Naive thymus-derived CD4-positive, alpha-beta T cell (primary cell): ENCODE measurements at regions of chr4 and their contacts with region 1.

Region 1: GRCh38 chr4:77742054-77742453 is 77.1 kb downstream of the CNOT6L start:
- DNase-seq: no peak
- ATAC-seq: no peak
- H3K4me3 ChIP-seq: no peak overlapping the region
- H3K4me3 Mint-ChIP-seq: no peak overlapping the region
- H3K27ac ChIP-seq: no peak overlapping the region
- H3K27ac Mint-ChIP-seq: peak overlapping the region in 1 of 9 donors; percentile 59
- H3K4me1 ChIP-seq: peaks cover 0 to 1% of the 10 kb centered on the region in 2 donors
- H3K4me1 Mint-ChIP-seq: peaks cover 22 to 67% (median 52%) of the 10 kb centered on the region in 7 donors
- H3K27me3 ChIP-seq: no peaks in the 10 kb centered on the region
- H3K27me3 Mint-ChIP-seq: no peaks in the 10 kb centered on the region

Region 2: DNA sequence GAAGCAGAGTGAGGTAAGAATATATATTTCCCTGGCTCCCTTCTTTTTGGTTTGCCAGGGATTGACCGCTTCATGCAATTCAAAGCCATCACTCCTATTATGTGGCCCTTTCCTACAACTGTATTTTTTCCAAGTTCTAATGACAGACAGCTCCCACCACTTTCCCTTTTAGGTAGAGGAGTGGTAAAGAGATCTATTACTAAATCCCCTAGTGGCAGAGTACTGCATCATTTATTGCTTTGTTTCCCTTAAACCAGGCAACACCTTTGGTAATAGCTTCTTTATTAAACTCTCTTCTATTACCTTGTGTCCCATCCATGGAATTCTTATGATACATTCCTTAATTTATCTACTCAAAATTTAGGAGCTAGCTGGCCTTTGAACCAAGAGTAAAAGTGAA is 13.6 kb before region 1 on chr4:
- CTCF ChIA-PET with region 1: no interaction called
- POLR2A ChIA-PET with region 1: interaction called, 3 read pairs
- intact Hi-C with region 1: loop called in 1 of 2 experiments (anchors 2 kb)
- DNase-seq: no peak
- ATAC-seq: no peak
- H3K4me3 ChIP-seq: no peak overlapping the region
- H3K4me3 Mint-ChIP-seq: no peak overlapping the region
- H3K27ac ChIP-seq: no peak overlapping the region
- H3K27ac Mint-ChIP-seq: peak overlapping the region in 8 of 9 donors; percentile 4 to 63 (median 45)
- H3K4me1 ChIP-seq: no peaks in the 10 kb centered on the region
- H3K4me1 Mint-ChIP-seq: peaks cover 5 to 42% (median 32%) of the 10 kb centered on the region in 7 donors
- H3K27me3 ChIP-seq: no peaks in the 10 kb centered on the region
- H3K27me3 Mint-ChIP-seq: no peaks in the 10 kb centered on the region

Region 3: GRCh38 chr4:77758804-77759203 is 16.8 kb after region 1 on chr4:
- CTCF ChIA-PET with region 1: interaction called, 4 read pairs
- POLR2A ChIA-PET with region 1: no interaction called
- intact Hi-C with region 1: loop called in 1 of 2 experiments (anchors 2 kb)
- DNase-seq: no peak
- ATAC-seq: no peak
- H3K4me3 ChIP-seq: no peak overlapping the region
- H3K4me3 Mint-ChIP-seq: peak overlapping the region in 4 of 10 donors; percentile 6 to 63 (median 30)
- H3K27ac ChIP-seq: no peak overlapping the region
- H3K27ac Mint-ChIP-seq: peak overlapping the region in 5 of 9 donors; percentile 49 to 89 (median 64)
- H3K4me1 ChIP-seq: peaks cover 0 to 9% of the 10 kb centered on the region in 2 donors
- H3K4me1 Mint-ChIP-seq: peaks cover 12 to 59% (median 43%) of the 10 kb centered on the region in 7 donors
- H3K27me3 ChIP-seq: no peaks in the 10 kb centered on the region
- H3K27me3 Mint-ChIP-seq: no peaks in the 10 kb centered on the region

Region 4: GRCh38 chr4:77921701-77922100 is 179.6 kb after region 1 on chr4:
- CTCF ChIA-PET with region 1: no interaction called
- POLR2A ChIA-PET with region 1: no interaction called
- intact Hi-C with region 1: no loop called
- DNase-seq: no peak
- ATAC-seq: no peak
- H3K4me3 ChIP-seq: no peak overlapping the region
- H3K4me3 Mint-ChIP-seq: no peak overlapping the region
- H3K27ac ChIP-seq: no peak overlapping the region
- H3K27ac Mint-ChIP-seq: no peak overlapping the region
- H3K4me1 ChIP-seq: no peaks in the 10 kb centered on the region
- H3K4me1 Mint-ChIP-seq: peaks cover 7 to 31% (median 17%) of the 10 kb centered on the region in 7 donors
- H3K27me3 ChIP-seq: no peaks in the 10 kb centered on the region
- H3K27me3 Mint-ChIP-seq: no peaks in the 10 kb centered on the region